Mammary epithelial cell (primary cell): ENCODE measurements at regions of chr1 and their contacts with region 1.

Region 1: GRCh38 chr1:52674497-52675384 is 23.4 kb downstream of the COA7 start:
- DNase-seq: peak; percentile 60
- H3K4me3 ChIP-seq: no peak overlapping the region
- H3K27ac ChIP-seq: no peak overlapping the region
- H3K4me1 ChIP-seq: peaks cover 22% of the 10 kb centered on the region
- H3K27me3 ChIP-seq: no peaks in the 10 kb centered on the region
- CTCF ChIP-seq: no peak

Region 2: DNA sequence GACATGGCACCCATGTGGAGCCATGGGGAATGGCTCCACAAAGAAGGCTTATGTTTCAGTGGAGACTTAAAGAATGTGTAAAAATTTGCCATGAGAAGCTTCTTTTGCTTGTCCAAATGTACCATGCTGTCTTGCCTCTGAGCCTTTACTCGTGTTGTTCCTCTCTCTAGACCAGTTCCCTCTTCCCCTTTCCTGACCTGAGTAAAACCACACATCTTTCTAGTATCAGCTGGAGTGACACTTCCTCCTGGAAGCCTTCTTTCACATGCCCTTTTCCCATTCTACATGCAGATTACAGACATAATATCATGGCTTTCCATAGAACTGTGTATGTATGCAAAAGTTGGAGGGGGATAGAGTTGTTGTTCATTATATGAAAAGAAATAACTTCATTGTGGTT is 86.2 kb before region 1 on chr1:
- CTCF ChIA-PET with region 1: no interaction called
- dilution Hi-C with region 1: loop called (anchors 5 kb)
- in situ Hi-C with region 1: no loop called
- intact Hi-C with region 1: no loop called
- DNase-seq: no peak
- H3K4me3 ChIP-seq: no peak overlapping the region
- H3K27ac ChIP-seq: no peak overlapping the region
- H3K4me1 ChIP-seq: no peaks in the 10 kb centered on the region
- H3K27me3 ChIP-seq: no peaks in the 10 kb centered on the region
- CTCF ChIP-seq: no peak